ENCODE measurements at regions of chr7 and their contacts with region 1.

Region 1: GRCh38 chr7:114085592-114086501 is 167.0 kb upstream of the PPP1R3A start:
- DNase-seq: no peak
- ATAC-seq: peak; percentile 52
- H3K4me3 Mint-ChIP-seq: peak overlapping the region; percentile 89
- H3K27ac Mint-ChIP-seq: no peak overlapping the region
- H3K4me1 Mint-ChIP-seq: peaks cover 53% of the 10 kb centered on the region
- H3K27me3 Mint-ChIP-seq: peaks cover 61% of the 10 kb centered on the region
- CTCF ChIP-seq: no peak

Region 2: DNA sequence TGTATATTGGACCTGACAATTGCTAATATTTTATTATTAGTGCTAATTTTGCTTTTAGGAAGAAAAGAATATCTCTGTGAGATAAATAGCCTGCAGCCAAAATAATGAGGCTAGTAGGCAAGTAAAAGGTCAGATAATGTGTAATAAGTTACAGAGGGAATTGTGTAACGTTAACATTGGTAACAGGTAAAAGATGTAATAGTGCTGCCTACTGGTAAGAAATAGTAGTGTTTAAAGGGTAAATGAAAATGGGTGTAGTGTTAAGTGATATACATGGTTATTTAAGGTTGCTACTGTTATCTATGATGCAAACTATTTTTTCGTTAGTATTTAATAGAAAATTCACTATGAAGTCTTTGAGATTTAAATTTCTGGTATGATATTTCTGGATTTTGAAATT is 319.6 kb after region 1 on chr7:
- CTCF ChIA-PET with region 1: no interaction called
- POLR2A ChIA-PET with region 1: no interaction called
- intact Hi-C with region 1: loop called (anchors 10 kb)
- DNase-seq: no peak
- ATAC-seq: no peak
- H3K4me3 Mint-ChIP-seq: no peak overlapping the region
- H3K27ac Mint-ChIP-seq: no peak overlapping the region
- H3K4me1 Mint-ChIP-seq: no peaks in the 10 kb centered on the region
- H3K27me3 Mint-ChIP-seq: no peaks in the 10 kb centered on the region
- CTCF ChIP-seq: no peak

Region 3: DNA sequence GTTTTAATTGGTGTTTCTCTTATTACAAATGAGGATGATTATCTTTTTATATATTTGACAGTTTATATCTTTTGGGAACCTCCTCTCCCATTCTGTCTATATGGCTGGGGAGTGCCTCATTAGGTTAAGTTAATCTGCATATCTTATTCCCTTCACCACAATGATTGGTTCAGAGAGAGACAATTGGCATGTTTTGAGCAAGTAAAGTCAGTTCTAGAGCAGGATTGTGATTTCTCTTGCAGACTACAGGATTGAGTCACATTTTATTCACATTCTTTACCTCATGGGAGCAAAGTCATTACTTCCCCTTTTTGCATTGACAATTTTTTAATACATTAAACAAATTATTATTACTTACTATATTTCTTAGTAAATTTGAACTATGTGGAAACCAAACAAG is 1181.7 kb after region 1 on chr7:
- CTCF ChIA-PET with region 1: no interaction called
- POLR2A ChIA-PET with region 1: interaction called, 10 read pairs
- intact Hi-C with region 1: no loop called
- DNase-seq: no peak
- ATAC-seq: no peak
- H3K4me3 Mint-ChIP-seq: no peak overlapping the region
- H3K27ac Mint-ChIP-seq: no peak overlapping the region
- H3K4me1 Mint-ChIP-seq: no peaks in the 10 kb centered on the region
- H3K27me3 Mint-ChIP-seq: no peaks in the 10 kb centered on the region
- CTCF ChIP-seq: no peak

Region 4: DNA sequence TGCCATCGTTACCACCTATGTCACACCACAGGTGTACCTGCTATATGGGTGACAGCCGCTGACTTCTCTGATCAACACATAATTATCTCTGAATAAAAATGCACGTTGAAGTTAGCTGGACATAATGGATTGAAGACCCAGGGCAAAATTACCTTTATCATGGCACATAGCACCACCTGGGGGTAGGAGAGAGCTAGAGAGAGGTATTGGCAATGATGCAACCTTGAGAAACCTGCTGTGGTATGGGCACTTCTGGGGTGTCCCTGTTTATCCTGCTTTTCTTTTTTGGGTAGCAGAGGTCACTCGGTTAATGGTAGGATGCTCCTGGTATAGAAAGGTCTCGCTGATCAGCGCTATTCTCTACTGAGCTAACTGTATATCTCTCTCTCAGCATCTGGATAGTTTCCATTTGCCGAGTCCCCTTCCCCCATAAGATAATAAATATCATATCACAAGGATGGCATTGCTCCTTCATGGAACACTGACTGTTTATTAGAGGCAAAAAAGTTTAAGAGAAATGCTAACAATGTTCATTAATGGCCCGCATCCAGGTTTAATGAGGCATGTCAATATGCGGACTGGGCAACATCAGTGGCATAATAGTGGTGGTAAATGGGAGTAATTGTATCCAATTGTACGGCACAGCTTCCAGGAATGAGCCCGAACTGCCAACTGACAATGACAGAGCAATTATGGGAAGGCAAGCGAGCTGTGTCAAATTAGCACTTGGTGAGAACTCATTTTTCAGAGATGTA is 1621.6 kb after region 1 on chr7:
- CTCF ChIA-PET with region 1: no interaction called
- POLR2A ChIA-PET with region 1: no interaction called
- intact Hi-C with region 1: loop called (anchors 10 kb)
- DNase-seq: no peak
- ATAC-seq: no peak
- H3K4me3 Mint-ChIP-seq: no peak overlapping the region
- H3K27ac Mint-ChIP-seq: no peak overlapping the region
- H3K4me1 Mint-ChIP-seq: no peaks in the 10 kb centered on the region
- H3K27me3 Mint-ChIP-seq: no peaks in the 10 kb centered on the region
- CTCF ChIP-seq: no peak

Region 5: GRCh38 chr7:115910541-115911164 is 1824.8 kb after region 1 on chr7:
- CTCF ChIA-PET with region 1: no interaction called
- POLR2A ChIA-PET with region 1: no interaction called
- intact Hi-C with region 1: loop called (anchors 1 kb)
- DNase-seq: no peak
- ATAC-seq: peak; percentile 37
- H3K4me3 Mint-ChIP-seq: no peak overlapping the region
- H3K27ac Mint-ChIP-seq: no peak overlapping the region
- H3K4me1 Mint-ChIP-seq: peaks cover 4% of the 10 kb centered on the region
- H3K27me3 Mint-ChIP-seq: peaks cover 4% of the 10 kb centered on the region
- CTCF ChIP-seq: no peak